ENCODE measurements at regions of chr16 and their contacts with region 1.

Region 1: DNA sequence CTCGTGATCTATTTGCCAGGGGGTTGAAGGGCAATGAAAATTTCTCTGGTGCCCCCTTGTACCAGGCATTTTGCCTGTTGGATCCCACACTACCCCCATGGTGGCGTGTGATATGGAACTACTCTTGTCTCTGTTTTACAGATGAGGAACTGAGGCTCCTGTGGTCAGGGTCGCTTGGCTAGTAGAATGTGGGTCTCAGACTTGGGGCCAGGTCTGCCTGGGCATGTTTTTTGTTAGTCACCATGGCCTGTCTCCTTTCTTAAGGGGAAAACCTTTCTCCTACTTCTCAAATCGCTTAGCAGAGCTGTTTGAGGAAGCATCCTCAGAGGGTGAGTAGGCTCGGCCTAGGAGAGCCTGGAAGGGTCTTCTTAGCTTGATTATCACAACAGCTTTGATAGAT is 51.2 kb downstream of the CLEC16A start:
- DNase-seq: no peak
- ATAC-seq: no peak
- H3K4me3 ChIP-seq: no peak overlapping the region
- H3K27ac ChIP-seq: no peak overlapping the region
- H3K4me1 ChIP-seq: no peaks in the 10 kb centered on the region
- H3K27me3 ChIP-seq: no peaks in the 10 kb centered on the region
- CTCF ChIP-seq: no peak

Region 2: GRCh38 chr16:11047057-11047456 is 51.5 kb after region 1 on chr16:
- intact Hi-C with region 1: loop called in 1 of 3 experiments (anchors 5 kb)
- DNase-seq: no peak
- ATAC-seq: peak in 1 of 4 donors; percentile 20
- H3K4me3 ChIP-seq: no peak overlapping the region
- H3K27ac ChIP-seq: no peak overlapping the region
- H3K4me1 ChIP-seq: no peaks in the 10 kb centered on the region
- H3K27me3 ChIP-seq: no peaks in the 10 kb centered on the region
- CTCF ChIP-seq: no peak

Measured in pancreas (tissue), 10 donors.